CD4-positive, alpha-beta T cell (primary cell): ENCODE measurements at regions of chr12 and their contacts with region 1.

Region 1: DNA sequence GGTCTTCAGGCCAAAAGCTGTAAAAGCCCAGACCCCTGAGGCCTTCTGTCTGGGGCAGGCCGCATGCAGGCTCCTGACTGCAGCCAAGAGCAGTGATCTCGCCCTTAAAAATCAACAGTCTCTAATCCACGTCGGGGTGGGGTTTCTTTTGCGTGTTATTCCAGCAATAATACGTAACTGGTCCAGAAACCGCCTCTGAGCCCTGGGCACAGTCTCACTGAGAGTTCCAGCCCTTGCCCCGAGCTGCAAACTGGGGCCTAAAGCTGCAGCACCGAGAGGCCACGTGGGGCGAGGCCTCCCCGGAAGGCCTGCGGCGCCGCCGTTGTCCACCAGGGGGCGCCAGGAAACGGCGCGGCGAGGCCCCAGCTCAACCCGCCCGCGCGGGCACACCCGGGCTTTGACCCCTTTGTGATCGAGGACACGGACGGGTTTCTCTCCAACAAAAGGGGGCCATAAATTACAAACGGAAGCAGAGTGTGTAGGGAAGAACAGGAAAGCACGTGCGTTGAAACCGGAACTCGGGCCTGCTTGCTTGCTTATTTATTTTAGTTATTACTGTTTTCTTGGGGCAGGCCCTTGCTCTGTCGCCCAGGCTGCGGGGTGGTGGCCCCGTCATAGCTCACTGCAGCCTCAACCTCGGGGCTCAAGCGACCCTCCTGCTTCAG is 87.2 kb downstream of the NINJ2 start:
- DNase-seq: peak; percentile 59 to 91 (median 83)
- ATAC-seq: peak; percentile 99
- H3K4me3 ChIP-seq: peak overlapping the region; percentile 34
- H3K4me3 Mint-ChIP-seq: no peak overlapping the region
- H3K27ac ChIP-seq: no peak overlapping the region
- H3K27ac Mint-ChIP-seq: peak overlapping the region; percentile 22
- H3K4me1 ChIP-seq: peaks cover 20% of the 10 kb centered on the region
- H3K4me1 Mint-ChIP-seq: peaks cover 24% of the 10 kb centered on the region
- H3K27me3 ChIP-seq: no peaks in the 10 kb centered on the region
- H3K27me3 Mint-ChIP-seq: no peaks in the 10 kb centered on the region
- CTCF ChIP-seq: peak; percentile 98

Region 2: GRCh38 chr12:503111-503761 is 72.8 kb before region 1 on chr12:
- CTCF ChIA-PET with region 1: no interaction called
- POLR2A ChIA-PET with region 1: no interaction called
- intact Hi-C with region 1: no loop called
- DNase-seq: no peak
- ATAC-seq: no peak
- H3K4me3 ChIP-seq: no peak overlapping the region
- H3K4me3 Mint-ChIP-seq: no peak overlapping the region
- H3K27ac ChIP-seq: no peak overlapping the region
- H3K27ac Mint-ChIP-seq: no peak overlapping the region
- H3K4me1 ChIP-seq: no peaks in the 10 kb centered on the region
- H3K4me1 Mint-ChIP-seq: peaks cover 2% of the 10 kb centered on the region
- H3K27me3 ChIP-seq: no peaks in the 10 kb centered on the region
- H3K27me3 Mint-ChIP-seq: peaks cover 5% of the 10 kb centered on the region
- CTCF ChIP-seq: no peak

Region 3: GRCh38 chr12:630656-631632 is 54.9 kb after region 1 on chr12:
- CTCF ChIA-PET with region 1: interaction called, 12 read pairs
- POLR2A ChIA-PET with region 1: interaction called, 6 read pairs
- intact Hi-C with region 1: loop called in 1 of 2 experiments (anchors 5 kb)
- DNase-seq: peak in 13 of 14 experiments; percentile 41 to 85 (median 66)
- ATAC-seq: peak; percentile 95
- H3K4me3 ChIP-seq: no peak overlapping the region
- H3K4me3 Mint-ChIP-seq: peak overlapping the region; percentile 96
- H3K27ac ChIP-seq: peak overlapping the region in 1 of 2 donors; percentile 60
- H3K27ac Mint-ChIP-seq: peak overlapping the region; percentile 98
- H3K4me1 ChIP-seq: peaks cover 37% of the 10 kb centered on the region
- H3K4me1 Mint-ChIP-seq: peaks cover 41% of the 10 kb centered on the region
- H3K27me3 ChIP-seq: no peaks in the 10 kb centered on the region
- H3K27me3 Mint-ChIP-seq: no peaks in the 10 kb centered on the region
- CTCF ChIP-seq: no peak

Region 4: DNA sequence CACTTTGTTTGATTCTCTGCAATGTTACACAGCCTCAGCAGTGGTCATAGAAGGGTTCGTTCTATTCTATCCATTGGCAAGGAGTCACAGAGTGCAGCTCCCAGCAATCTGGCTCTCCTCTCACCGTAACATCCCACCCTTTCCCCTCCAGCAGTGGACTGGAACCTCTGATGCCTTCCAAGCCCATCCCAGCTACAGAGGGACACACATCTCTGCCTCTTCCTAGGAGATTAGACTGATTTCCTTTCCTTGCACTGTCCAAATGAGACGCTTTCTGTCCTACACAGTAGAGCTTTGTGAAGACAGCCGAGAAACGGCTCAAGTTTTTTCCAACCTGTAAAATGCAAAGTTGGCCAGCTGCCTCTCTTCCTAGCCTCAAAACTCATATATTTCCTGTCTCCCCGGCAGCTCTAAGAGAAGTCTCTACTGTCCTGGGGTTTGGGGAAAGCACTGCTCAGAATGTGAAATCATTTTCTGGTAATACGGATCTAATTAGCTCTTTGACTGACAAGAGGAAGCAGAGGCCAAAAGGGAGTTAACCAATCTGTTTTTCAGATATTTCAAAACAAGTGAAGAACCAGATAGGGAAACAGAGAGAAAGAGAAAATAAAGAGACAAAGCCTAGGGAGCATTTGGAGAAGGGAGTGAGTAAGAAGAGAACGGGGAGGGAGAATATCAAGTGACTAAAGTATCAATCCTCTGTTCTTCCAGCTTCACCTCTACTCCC is 86.6 kb after region 1 on chr12:
- CTCF ChIA-PET with region 1: interaction called, 9 read pairs
- POLR2A ChIA-PET with region 1: interaction called, 6 read pairs
- intact Hi-C with region 1: loop called in 1 of 2 experiments (anchors 10 kb)
- DNase-seq: peak in 1 of 14 experiments; percentile 25
- ATAC-seq: no peak
- H3K4me3 ChIP-seq: peak overlapping the region; percentile 1
- H3K4me3 Mint-ChIP-seq: peak overlapping the region; percentile 84
- H3K27ac ChIP-seq: no peak overlapping the region
- H3K27ac Mint-ChIP-seq: peak overlapping the region; percentile 63
- H3K4me1 ChIP-seq: peaks cover 67% of the 10 kb centered on the region
- H3K4me1 Mint-ChIP-seq: peaks cover 62% of the 10 kb centered on the region
- H3K27me3 ChIP-seq: no peaks in the 10 kb centered on the region
- H3K27me3 Mint-ChIP-seq: no peaks in the 10 kb centered on the region
- CTCF ChIP-seq: no peak

Region 5: DNA sequence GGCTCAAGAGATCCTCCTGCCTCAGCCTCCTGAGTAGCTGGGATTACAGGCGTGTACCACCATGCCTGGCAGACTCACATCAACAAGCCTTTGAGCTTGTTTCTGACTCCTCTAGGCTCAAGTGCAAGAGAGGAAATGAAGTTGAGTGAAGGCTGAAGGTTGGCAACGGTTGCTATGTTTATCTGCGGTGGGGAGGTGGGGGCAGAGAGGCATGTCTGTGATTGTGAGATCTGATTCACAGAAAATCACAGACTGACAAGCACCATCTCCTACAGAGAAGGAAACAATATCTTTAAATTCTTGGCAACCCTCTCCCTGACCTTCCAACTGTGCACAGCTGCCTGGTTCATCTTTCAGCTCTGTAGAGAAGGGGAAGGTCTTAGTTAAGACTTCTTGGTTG is 109.3 kb after region 1 on chr12:
- CTCF ChIA-PET with region 1: interaction called, 11 read pairs
- POLR2A ChIA-PET with region 1: interaction called, 3 read pairs
- intact Hi-C with region 1: no loop called
- DNase-seq: peak; percentile 70 to 96 (median 78)
- ATAC-seq: peak; percentile 92
- H3K4me3 ChIP-seq: peak overlapping the region; percentile 7
- H3K4me3 Mint-ChIP-seq: peak overlapping the region; percentile 39
- H3K27ac ChIP-seq: peak overlapping the region; percentile 75 to 93
- H3K27ac Mint-ChIP-seq: peak overlapping the region; percentile 91
- H3K4me1 ChIP-seq: peaks cover 27% of the 10 kb centered on the region
- H3K4me1 Mint-ChIP-seq: peaks cover 60% of the 10 kb centered on the region
- H3K27me3 ChIP-seq: no peaks in the 10 kb centered on the region
- H3K27me3 Mint-ChIP-seq: no peaks in the 10 kb centered on the region
- CTCF ChIP-seq: no peak

Region 6: GRCh38 chr12:818733-819132 is 242.7 kb after region 1 on chr12:
- CTCF ChIA-PET with region 1: interaction called, 26 read pairs
- POLR2A ChIA-PET with region 1: interaction called, 13 read pairs
- intact Hi-C with region 1: loop called (anchors 1 kb)
- DNase-seq: no peak
- ATAC-seq: no peak
- H3K4me3 ChIP-seq: no peak overlapping the region
- H3K4me3 Mint-ChIP-seq: no peak overlapping the region
- H3K27ac ChIP-seq: no peak overlapping the region
- H3K27ac Mint-ChIP-seq: peak overlapping the region; percentile 18
- H3K4me1 ChIP-seq: peaks cover 4% of the 10 kb centered on the region
- H3K4me1 Mint-ChIP-seq: peaks cover 64% of the 10 kb centered on the region
- H3K27me3 ChIP-seq: no peaks in the 10 kb centered on the region
- H3K27me3 Mint-ChIP-seq: no peaks in the 10 kb centered on the region
- CTCF ChIP-seq: no peak

Region 7: GRCh38 chr12:949453-950191 is 373.5 kb after region 1 on chr12 and contains the start of gene RAD52:
- CTCF ChIA-PET with region 1: interaction called, 7 read pairs
- POLR2A ChIA-PET with region 1: no interaction called
- intact Hi-C with region 1: loop called in 1 of 2 experiments (anchors 2 kb)
- DNase-seq: peak; percentile 95 to 99 (median 97)
- ATAC-seq: peak; percentile 87
- H3K4me3 ChIP-seq: peak within 1 kb of the TSS; percentile 75
- H3K4me3 Mint-ChIP-seq: peak within 1 kb of the TSS; percentile 98
- H3K27ac ChIP-seq: peak within 1 kb of the TSS; percentile 80 to 86
- H3K27ac Mint-ChIP-seq: peak within 1 kb of the TSS; percentile 90
- H3K4me1 ChIP-seq: peaks cover 24% of the 10 kb centered on the region
- H3K4me1 Mint-ChIP-seq: peaks cover 34% of the 10 kb centered on the region
- H3K27me3 ChIP-seq: no peaks in the 10 kb centered on the region
- H3K27me3 Mint-ChIP-seq: no peaks in the 10 kb centered on the region
- CTCF ChIP-seq: peak; percentile 96
- total RNA-seq, gene RAD52: 7.0 to 8.1 TPM

Region 8: GRCh38 chr12:1605129-1606020 is 1029.3 kb after region 1 on chr12:
- CTCF ChIA-PET with region 1: interaction called, 4 read pairs
- POLR2A ChIA-PET with region 1: interaction called, 3 read pairs
- intact Hi-C with region 1: loop called in 1 of 2 experiments (anchors 10 kb)
- DNase-seq: peak; percentile 37 to 87 (median 50)
- ATAC-seq: peak; percentile 69
- H3K4me3 ChIP-seq: peak overlapping the region; percentile 51
- H3K4me3 Mint-ChIP-seq: peak overlapping the region; percentile 79
- H3K27ac ChIP-seq: no peak overlapping the region
- H3K27ac Mint-ChIP-seq: peak overlapping the region; percentile 10
- H3K4me1 ChIP-seq: peaks cover 26% of the 10 kb centered on the region
- H3K4me1 Mint-ChIP-seq: peaks cover 39% of the 10 kb centered on the region
- H3K27me3 ChIP-seq: no peaks in the 10 kb centered on the region
- H3K27me3 Mint-ChIP-seq: no peaks in the 10 kb centered on the region
- CTCF ChIP-seq: peak; percentile 77